ENCODE measurements at regions of chr10 and their contacts with region 1.

Region 1: DNA sequence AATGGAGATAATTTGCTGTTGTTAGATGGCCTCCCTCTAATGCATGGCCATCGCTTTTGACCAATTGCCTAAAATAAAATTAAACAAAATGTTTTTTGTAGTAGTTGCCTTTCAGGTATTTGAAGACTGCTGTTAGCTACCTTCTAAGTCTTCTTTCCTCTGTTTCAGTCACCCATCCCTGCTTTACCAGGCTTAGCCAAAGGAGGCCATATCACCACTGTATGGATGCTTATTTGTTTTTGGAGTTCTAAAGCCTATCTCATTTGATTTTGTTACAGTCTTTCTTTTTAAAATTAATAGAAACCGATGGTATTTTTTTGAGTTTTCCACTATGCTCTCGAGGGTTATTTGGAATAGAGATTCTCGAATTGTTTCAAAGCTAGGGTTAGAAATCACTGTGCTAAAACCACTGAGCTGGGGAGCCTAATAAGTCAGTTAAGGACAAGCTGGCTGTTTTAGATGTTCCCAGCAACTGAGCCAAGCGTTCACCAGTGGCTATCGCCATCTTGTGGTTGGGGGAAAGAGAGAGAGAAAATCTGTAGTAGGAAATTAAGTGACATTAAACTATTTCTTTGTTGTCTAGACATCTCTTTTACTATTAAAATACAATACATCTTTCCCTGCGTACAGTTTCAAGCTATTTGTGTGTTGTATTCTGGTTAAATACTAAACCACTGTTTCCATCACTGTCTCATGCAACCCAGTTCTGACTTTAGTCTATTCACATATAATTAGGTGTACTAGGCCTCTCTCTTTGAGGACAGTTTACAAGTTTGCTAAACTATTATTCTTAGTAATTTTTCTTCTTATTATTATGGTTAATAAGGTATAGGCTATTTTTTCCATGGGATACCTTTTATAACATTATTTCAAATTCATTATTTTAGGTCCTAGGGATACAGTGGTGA is 52.2 kb downstream of the GPR158 start:
- DNase-seq: peak; percentile 48
- ATAC-seq: no peak
- H3K4me3 Mint-ChIP-seq: no peak overlapping the region
- H3K27ac Mint-ChIP-seq: no peak overlapping the region
- H3K4me1 Mint-ChIP-seq: no peaks in the 10 kb centered on the region
- H3K27me3 Mint-ChIP-seq: no peaks in the 10 kb centered on the region

Region 2: GRCh38 chr10:25113191-25114035 is 113.6 kb before region 1 on chr10:
- CTCF ChIA-PET with region 1: interaction called, 9 read pairs
- POLR2A ChIA-PET with region 1: no interaction called
- intact Hi-C with region 1: loop called (anchors 1 to 2 kb)
- DNase-seq: peak; percentile 72
- ATAC-seq: peak; percentile 58
- H3K4me3 Mint-ChIP-seq: no peak overlapping the region
- H3K27ac Mint-ChIP-seq: no peak overlapping the region
- H3K4me1 Mint-ChIP-seq: peaks cover 2% of the 10 kb centered on the region
- H3K27me3 Mint-ChIP-seq: peaks cover 24% of the 10 kb centered on the region

Region 3: GRCh38 chr10:25753776-25754175 is 526.7 kb after region 1 on chr10:
- CTCF ChIA-PET with region 1: no interaction called
- POLR2A ChIA-PET with region 1: no interaction called
- intact Hi-C with region 1: no loop called
- DNase-seq: no peak
- ATAC-seq: no peak
- H3K4me3 Mint-ChIP-seq: no peak overlapping the region
- H3K27ac Mint-ChIP-seq: no peak overlapping the region
- H3K4me1 Mint-ChIP-seq: no peaks in the 10 kb centered on the region
- H3K27me3 Mint-ChIP-seq: no peaks in the 10 kb centered on the region

Measured in activated CD4-positive, alpha-beta T cell treated with anti-CD3 and anti-CD28 coated beads for 36 hours (primary cell).